Endothelial cell of umbilical vein (primary cell): ENCODE measurements at regions of chr9 and their contacts with region 1.

Region 1: GRCh38 chr9:22052376-22052945 is 43.4 kb upstream of the CDKN2B start:
- DNase-seq: peak; percentile 94
- H3K4me3 ChIP-seq: no peak overlapping the region
- H3K27ac ChIP-seq: peak overlapping the region; percentile 51
- H3K4me1 ChIP-seq: peaks cover 35% of the 10 kb centered on the region
- H3K27me3 ChIP-seq: no peaks in the 10 kb centered on the region
- CTCF ChIP-seq: no peak
- POLR2A ChIP-seq: peak; percentile 20

Region 2: DNA sequence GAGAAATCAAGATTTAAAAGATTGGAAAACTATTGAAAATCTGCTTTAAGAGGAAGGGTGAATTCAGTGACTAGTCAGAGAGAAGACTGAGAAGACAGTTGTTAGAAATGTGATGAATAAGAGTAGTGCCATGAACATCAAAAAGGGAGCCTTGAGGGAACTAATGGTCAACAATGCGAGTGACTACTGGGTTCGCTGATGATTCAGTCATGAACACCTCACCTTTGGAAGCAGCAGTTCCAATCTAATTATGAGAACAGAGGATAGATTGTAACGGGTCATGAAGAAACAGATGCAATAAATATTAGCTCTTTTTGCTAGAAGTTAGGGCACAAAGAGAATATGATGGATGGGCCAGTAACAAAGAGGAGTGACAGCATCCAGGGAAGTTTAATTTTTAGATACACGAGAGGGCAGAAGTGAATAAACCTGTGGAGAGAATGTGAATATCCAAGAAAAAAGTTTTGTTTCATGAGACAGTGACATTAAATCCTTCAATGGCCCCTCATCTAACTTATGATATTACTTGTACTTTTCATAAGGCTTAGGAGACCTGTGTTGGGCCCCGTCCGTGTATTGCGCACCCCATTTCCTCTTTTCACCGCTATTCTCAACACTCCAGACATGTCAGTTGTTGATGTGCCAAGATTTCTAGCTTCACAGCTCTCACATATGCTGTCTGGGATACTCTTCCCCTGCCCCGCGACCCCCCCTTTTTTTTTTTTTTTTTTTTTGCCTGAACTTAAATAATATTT is 546.9 kb before region 1 on chr9:
- CTCF ChIA-PET with region 1: no interaction called
- POLR2A ChIA-PET with region 1: no interaction called
- dilution Hi-C with region 1: no loop called
- intact Hi-C with region 1: no loop called
- DNase-seq: no peak
- H3K4me3 ChIP-seq: no peak overlapping the region
- H3K27ac ChIP-seq: no peak overlapping the region
- H3K4me1 ChIP-seq: peaks cover 29% of the 10 kb centered on the region
- H3K27me3 ChIP-seq: no peaks in the 10 kb centered on the region
- CTCF ChIP-seq: no peak
- POLR2A ChIP-seq: peak; percentile 24

Region 3: DNA sequence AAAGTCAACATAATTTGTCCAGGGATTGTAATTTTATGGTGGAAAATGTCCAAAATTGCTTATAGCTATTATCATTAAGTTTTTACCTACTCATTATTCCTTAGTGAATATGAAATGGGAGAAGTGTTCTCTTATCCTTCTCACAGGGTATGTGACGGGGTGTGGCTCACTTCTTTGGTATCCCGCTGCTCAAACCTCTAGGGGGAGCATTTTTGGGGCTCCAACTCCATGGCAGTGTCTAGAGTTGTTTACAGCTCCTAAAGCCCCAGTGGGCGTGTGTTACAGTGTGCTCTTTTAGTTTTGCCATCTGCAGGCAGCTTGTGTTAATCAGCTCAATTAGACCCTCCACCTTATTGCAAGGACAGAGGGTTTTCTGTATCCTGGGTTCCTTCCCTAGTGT is 147.7 kb before region 1 on chr9:
- CTCF ChIA-PET with region 1: no interaction called
- POLR2A ChIA-PET with region 1: no interaction called
- dilution Hi-C with region 1: no loop called
- intact Hi-C with region 1: no loop called
- DNase-seq: no peak
- H3K4me3 ChIP-seq: no peak overlapping the region
- H3K27ac ChIP-seq: no peak overlapping the region
- H3K4me1 ChIP-seq: peaks cover 18% of the 10 kb centered on the region
- H3K27me3 ChIP-seq: no peaks in the 10 kb centered on the region
- CTCF ChIP-seq: no peak
- POLR2A ChIP-seq: no peak

Region 4: DNA sequence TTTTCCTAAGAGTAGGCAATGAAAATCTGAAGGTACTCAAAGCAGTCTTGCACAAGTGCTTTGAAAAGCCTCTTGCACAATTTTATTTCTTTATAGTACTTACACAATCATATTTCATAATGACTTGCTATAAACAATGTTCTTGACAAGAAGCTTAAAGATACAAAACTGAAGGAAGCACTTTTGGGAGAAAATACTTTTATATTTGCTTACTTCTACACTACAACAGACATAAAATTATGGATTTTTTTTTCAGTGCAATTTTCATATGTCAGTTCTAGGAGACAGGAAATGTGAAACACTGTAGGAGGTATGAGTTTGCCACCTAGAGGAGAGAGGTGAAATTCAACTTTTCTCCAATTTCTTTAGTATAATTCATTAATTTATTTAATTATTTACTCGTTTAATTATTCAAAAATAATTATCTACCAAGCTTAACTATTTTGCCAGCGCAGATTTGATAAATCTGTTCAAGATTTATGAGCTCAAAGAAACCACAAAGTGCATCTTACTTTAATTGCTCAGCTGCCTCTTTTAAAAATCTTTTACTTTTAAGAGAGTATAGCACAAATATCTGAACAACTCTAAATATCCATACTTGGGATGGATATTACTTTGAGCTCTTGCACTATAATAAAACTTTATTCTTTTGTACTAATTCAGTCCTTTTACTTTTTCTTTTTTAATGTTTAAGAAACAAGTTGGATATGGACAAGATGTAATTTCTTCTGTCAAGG is 14.3 kb before region 1 on chr9:
- CTCF ChIA-PET with region 1: interaction called, 11 read pairs
- POLR2A ChIA-PET with region 1: no interaction called
- dilution Hi-C with region 1: no loop called
- intact Hi-C with region 1: no loop called
- DNase-seq: peak; percentile 51
- H3K4me3 ChIP-seq: no peak overlapping the region
- H3K27ac ChIP-seq: no peak overlapping the region
- H3K4me1 ChIP-seq: no peaks in the 10 kb centered on the region
- H3K27me3 ChIP-seq: no peaks in the 10 kb centered on the region
- CTCF ChIP-seq: peak; percentile 22 to 38
- POLR2A ChIP-seq: no peak

Region 5: GRCh38 chr9:22065431-22066200 is 13.2 kb after region 1 on chr9:
- CTCF ChIA-PET with region 1: interaction called, 3 read pairs
- POLR2A ChIA-PET with region 1: no interaction called
- dilution Hi-C with region 1: no loop called
- intact Hi-C with region 1: loop called (anchors 2 kb)
- DNase-seq: no peak
- H3K4me3 ChIP-seq: no peak overlapping the region
- H3K27ac ChIP-seq: no peak overlapping the region
- H3K4me1 ChIP-seq: no peaks in the 10 kb centered on the region
- H3K27me3 ChIP-seq: no peaks in the 10 kb centered on the region
- CTCF ChIP-seq: no peak
- POLR2A ChIP-seq: no peak

Region 6: DNA sequence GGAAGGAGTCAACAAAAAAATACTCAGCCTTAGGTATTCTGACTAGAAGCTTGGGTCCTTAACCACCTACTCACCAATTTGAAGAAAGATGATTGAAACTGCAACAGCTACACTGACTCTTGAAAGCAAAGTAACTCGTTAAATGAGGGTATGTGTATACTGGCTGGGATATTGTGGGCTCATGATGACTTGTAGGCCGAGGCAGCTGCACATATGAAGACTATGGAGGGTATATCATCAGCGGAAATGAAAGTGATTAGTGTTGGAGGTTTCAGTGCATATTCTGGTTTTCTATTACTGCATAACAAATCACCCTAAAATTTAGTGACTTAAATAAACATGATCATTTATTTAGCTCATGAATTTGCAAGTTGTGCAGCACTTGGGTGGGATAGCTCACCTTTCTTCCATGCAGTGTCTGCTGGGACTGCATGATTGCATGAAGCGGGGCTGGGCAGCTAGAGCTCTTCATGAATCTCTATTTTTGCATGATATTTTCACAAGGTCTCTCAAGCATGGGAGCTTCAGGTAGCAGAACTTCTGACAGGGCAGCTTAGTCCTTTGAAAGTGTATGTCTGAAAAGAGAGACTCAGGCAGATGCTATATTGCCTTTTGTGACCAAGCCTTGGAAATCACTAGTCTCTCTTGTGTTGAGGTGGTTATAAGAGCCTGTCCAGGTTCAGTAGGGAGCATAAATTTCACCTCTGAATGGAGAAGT is 52.7 kb after region 1 on chr9:
- CTCF ChIA-PET with region 1: no interaction called
- POLR2A ChIA-PET with region 1: no interaction called
- dilution Hi-C with region 1: no loop called
- intact Hi-C with region 1: loop called (anchors 5 kb)
- DNase-seq: no peak
- H3K4me3 ChIP-seq: no peak overlapping the region
- H3K27ac ChIP-seq: no peak overlapping the region
- H3K4me1 ChIP-seq: peaks cover 20% of the 10 kb centered on the region
- H3K27me3 ChIP-seq: no peaks in the 10 kb centered on the region
- CTCF ChIP-seq: no peak
- POLR2A ChIP-seq: no peak

Region 7: DNA sequence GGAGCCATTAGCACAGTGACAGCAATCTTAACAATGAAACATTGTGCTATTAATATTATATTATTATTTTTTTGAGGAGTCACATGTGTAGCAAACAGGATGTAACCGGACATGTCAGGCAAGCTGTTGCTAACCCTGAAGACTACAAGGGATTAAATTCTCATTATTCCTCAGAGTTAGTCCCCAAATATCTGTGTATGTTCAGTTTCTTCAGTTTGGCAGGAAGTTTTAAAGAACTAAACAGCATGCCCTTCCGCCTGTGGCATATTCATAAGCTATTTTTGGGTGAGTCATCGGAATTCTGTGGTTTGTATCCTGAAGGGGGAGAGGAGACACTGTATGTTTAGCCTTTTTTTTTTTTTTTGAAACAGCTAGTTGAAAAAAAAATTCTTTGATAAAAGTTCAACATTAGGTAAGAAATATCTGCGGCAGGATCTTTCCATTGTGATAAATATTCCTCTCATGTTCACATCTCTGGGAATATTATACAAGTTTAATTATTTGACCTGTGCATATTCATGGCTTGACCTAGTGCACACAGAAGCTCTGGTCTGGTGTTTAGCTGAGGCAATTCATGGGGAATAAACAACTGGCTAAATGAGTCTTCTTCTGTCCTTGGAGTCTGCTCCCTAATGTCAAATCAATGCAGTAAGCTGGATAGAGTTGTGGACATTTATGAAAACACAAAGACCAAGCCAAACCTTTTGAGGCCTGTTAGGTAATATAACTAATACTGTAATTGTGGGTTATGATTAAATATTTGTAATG is 159.3 kb after region 1 on chr9:
- CTCF ChIA-PET with region 1: interaction called, 3 read pairs
- POLR2A ChIA-PET with region 1: no interaction called
- dilution Hi-C with region 1: no loop called
- intact Hi-C with region 1: loop called (anchors 5 kb)
- DNase-seq: peak; percentile 92
- H3K4me3 ChIP-seq: no peak overlapping the region
- H3K27ac ChIP-seq: peak overlapping the region; percentile 21
- H3K4me1 ChIP-seq: peaks cover 30% of the 10 kb centered on the region
- H3K27me3 ChIP-seq: no peaks in the 10 kb centered on the region
- CTCF ChIP-seq: no peak
- POLR2A ChIP-seq: no peak

Region 8: DNA sequence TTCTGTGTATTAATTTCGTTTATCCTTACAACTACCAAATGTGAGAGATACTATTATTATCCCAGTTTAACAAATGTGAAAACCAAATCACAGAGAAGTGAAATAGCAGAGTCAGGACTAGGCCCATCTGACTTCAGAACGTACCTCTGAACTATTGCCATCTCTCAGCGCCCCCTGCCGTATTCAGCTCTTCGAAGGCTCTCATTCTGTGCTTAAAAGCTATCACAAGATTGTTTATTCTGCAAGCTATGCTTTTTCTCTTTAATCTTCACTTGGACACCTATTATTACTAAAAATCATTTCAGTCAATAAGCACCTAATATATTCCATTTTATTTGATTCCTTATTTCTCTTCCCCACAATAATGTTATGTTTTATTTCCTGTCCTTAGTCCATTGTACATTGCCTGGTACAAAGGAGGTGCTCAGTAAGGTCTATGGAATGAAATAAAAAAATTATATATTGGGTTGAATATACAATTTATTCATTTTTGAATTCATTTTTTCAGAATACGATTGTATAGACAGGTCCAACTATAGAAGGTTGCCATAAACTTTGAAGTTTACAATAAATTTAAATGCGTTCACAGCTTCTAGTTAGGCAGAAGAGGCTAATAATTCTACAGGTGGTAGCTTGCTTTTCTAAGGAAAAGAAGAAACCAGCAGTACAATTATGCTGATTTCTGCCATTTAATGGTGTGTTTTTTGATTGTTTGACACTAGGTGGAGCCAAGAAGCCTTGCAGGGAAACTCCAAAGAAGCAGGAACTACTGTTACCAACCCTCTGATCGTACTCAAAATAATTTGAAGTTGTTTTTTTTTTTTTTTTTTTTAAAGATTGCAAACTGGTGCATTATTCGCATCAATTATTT is 191.9 kb after region 1 on chr9:
- CTCF ChIA-PET with region 1: interaction called, 11 read pairs
- POLR2A ChIA-PET with region 1: no interaction called
- dilution Hi-C with region 1: no loop called
- intact Hi-C with region 1: no loop called
- DNase-seq: peak; percentile 47
- H3K4me3 ChIP-seq: no peak overlapping the region
- H3K27ac ChIP-seq: no peak overlapping the region
- H3K4me1 ChIP-seq: peaks cover 6% of the 10 kb centered on the region
- H3K27me3 ChIP-seq: peaks cover 4 to 7% of the 10 kb centered on the region in 2 experiments
- CTCF ChIP-seq: peak; percentile 28 to 58
- POLR2A ChIP-seq: no peak